ENCODE measurements at regions of chr2 and their contacts with region 1.

Region 1: DNA sequence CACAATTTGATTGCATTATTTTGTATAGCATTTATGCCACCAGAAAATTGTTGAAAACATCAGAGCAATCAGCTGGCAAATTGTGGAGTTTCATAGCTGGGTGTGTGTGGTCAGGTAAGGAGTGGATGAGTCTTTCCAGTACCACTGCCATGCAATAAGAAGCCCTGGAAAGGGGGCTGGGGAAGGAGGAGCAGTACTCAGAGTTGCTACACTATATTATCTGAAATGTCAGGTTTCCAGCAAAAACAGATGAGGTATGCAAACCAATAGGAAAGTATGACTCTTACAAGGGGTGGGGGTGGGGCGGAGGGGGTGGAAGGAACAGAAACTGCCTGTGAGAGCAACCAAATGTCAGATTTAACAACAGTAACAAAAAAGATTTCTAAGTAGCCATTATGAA is 112.2 kb downstream of the SOS1 start:
- DNase-seq: no peak
- ATAC-seq: peak; percentile 31
- H3K4me3 Mint-ChIP-seq: peak overlapping the region; percentile 48
- H3K27ac Mint-ChIP-seq: peak overlapping the region; percentile 69
- H3K4me1 Mint-ChIP-seq: peaks cover 16% of the 10 kb centered on the region
- H3K27me3 Mint-ChIP-seq: no peaks in the 10 kb centered on the region
- CTCF ChIP-seq: no peak

Region 2: GRCh38 chr2:38975042-38975441 is 33.6 kb before region 1 on chr2:
- CTCF ChIA-PET with region 1: no interaction called
- POLR2A ChIA-PET with region 1: no interaction called
- intact Hi-C with region 1: no loop called
- DNase-seq: no peak
- ATAC-seq: no peak
- H3K4me3 Mint-ChIP-seq: no peak overlapping the region
- H3K27ac Mint-ChIP-seq: no peak overlapping the region
- H3K4me1 Mint-ChIP-seq: no peaks in the 10 kb centered on the region
- H3K27me3 Mint-ChIP-seq: no peaks in the 10 kb centered on the region
- CTCF ChIP-seq: no peak

Region 3: DNA sequence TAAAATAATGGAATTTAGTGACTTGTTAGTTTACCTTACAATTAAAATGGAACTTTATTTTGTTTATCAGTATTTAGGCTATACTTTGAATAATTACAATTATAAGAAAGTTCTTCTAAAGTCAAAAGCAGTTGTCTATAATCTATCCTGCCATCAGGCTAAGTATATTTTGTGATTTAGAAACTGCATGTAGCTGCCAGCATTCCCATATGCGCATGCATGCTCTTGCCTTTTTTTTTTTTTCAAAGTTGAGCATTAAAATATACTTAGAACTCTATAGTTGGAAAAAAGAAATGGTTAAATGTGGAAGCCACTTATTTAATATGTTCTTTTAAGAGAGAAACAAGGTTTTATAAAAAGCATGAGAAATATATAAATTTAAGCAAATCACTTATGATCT is 19.9 kb before region 1 on chr2:
- CTCF ChIA-PET with region 1: interaction called, 3 read pairs
- POLR2A ChIA-PET with region 1: no interaction called
- intact Hi-C with region 1: loop called (anchors 1 kb)
- DNase-seq: no peak
- ATAC-seq: no peak
- H3K4me3 Mint-ChIP-seq: no peak overlapping the region
- H3K27ac Mint-ChIP-seq: no peak overlapping the region
- H3K4me1 Mint-ChIP-seq: no peaks in the 10 kb centered on the region
- H3K27me3 Mint-ChIP-seq: no peaks in the 10 kb centered on the region
- CTCF ChIP-seq: no peak

Measured in activated B cell treated with CpG ODN at 0.5 μM for 24 hours (primary cell).